ENCODE measurements at regions of chr2 and their contacts with region 1.

Region 1: DNA sequence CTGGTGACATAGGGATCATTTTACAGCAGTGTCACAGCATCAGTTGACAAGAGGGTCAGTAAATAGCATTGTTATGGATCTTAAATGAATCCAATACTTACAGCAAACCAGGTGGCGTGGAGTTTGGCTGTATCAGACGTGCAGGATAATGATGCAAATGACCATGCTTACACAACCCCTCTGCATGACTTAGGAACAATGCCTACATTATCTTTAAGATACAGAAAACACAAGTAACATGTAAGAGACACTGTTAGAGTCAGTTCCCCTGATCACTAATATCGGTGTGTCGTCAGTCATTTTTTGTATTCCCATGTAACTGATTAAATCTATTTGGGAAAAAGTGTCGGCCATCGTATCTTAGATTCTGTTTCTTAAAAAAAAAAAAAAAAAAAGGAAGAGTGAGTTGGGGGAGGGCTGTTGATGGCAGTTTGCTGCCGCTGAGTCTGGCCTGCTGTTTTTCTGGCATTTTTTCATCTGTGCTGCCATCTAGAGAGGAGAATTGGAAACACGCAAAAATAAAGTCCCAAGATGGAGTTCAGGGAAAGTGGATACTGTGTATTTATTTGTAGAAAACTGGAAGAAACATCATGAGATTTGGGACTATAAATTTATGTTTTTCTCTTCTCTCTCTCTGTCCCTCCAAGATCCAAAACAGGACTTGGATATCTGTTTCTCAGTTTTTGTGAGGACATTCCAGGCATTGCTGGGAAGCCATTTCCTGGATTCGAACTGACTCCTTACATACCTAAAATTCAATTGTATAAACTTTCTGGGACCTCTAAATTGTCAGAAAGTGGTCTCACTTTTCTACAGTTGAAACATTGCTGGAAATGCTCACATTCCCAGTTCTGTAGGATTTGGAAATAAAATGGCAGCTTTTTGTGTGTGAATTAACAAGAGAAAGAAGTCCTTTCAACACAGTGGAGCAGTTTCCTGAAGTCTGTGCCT is 60.3 kb upstream of the AGPS start:
- DNase-seq: peak in 7 of 9 donors; percentile 37 to 76 (median 72)
- ATAC-seq: peak; percentile 91
- H3K4me3 ChIP-seq: no peak overlapping the region
- H3K4me3 Mint-ChIP-seq: peak overlapping the region in 7 of 10 donors; percentile 3 to 73 (median 38)
- H3K27ac ChIP-seq: no peak overlapping the region
- H3K27ac Mint-ChIP-seq: peak overlapping the region in 8 of 9 donors; percentile 3 to 88 (median 56)
- H3K4me1 ChIP-seq: peaks cover 0 to 18% of the 10 kb centered on the region in 2 donors
- H3K4me1 Mint-ChIP-seq: peaks cover 4 to 33% (median 15%) of the 10 kb centered on the region in 7 donors
- H3K27me3 ChIP-seq: no peaks in the 10 kb centered on the region
- H3K27me3 Mint-ChIP-seq: no peaks in the 10 kb centered on the region

Region 2: DNA sequence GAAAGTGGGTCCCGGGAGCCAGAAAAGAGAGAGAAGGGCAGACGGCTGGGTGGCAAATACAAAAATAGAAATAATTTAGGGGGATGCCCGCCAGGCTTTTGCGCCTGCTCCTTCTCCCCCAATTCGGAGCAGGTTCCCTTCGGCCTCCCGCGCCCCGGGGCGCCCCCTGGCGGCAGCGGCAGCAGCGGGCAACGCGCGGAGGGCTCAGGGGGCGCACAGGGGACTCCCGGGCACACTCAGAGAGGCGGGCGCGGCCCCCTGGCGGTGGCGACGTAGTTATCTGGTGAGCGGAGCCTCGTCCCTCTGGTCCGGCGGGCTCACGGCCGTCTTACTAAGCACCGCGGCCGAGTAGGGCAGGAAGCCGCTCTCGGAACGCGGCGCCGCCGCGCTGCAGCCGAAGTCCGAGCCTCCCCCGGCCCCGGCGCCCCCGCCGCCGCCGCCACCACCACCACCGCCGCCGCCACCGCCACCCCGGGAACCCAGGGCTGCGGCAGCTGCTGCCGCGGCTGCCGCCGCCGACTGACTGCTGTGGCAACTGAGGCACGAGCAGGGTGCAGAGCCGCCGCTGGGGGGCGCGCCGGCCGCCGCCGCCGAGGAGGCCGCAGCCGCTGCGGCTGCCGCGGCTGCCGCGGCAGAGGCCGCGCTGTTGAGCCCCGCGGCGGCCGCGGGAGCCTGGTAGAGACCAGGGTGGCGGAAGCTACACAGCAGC is 1252.3 kb before region 1 on chr2:
- CTCF ChIA-PET with region 1: no interaction called
- POLR2A ChIA-PET with region 1: no interaction called
- intact Hi-C with region 1: no loop called
- DNase-seq: no peak
- ATAC-seq: peak; percentile 48
- H3K4me3 ChIP-seq: no peak overlapping the region
- H3K4me3 Mint-ChIP-seq: peak overlapping the region; percentile 64 to 82 (median 76)
- H3K27ac ChIP-seq: no peak overlapping the region
- H3K27ac Mint-ChIP-seq: peak overlapping the region in 6 of 9 donors; percentile 58 to 98 (median 90)
- H3K4me1 ChIP-seq: peaks cover 0 to 7% of the 10 kb centered on the region in 2 donors
- H3K4me1 Mint-ChIP-seq: peaks cover 0 to 29% (median 15%) of the 10 kb centered on the region in 7 donors
- H3K27me3 ChIP-seq: peaks cover 41 to 79% of the 10 kb centered on the region in 2 donors
- H3K27me3 Mint-ChIP-seq: peaks cover 67 to 83% (median 80%) of the 10 kb centered on the region in 5 donors

Region 3: DNA sequence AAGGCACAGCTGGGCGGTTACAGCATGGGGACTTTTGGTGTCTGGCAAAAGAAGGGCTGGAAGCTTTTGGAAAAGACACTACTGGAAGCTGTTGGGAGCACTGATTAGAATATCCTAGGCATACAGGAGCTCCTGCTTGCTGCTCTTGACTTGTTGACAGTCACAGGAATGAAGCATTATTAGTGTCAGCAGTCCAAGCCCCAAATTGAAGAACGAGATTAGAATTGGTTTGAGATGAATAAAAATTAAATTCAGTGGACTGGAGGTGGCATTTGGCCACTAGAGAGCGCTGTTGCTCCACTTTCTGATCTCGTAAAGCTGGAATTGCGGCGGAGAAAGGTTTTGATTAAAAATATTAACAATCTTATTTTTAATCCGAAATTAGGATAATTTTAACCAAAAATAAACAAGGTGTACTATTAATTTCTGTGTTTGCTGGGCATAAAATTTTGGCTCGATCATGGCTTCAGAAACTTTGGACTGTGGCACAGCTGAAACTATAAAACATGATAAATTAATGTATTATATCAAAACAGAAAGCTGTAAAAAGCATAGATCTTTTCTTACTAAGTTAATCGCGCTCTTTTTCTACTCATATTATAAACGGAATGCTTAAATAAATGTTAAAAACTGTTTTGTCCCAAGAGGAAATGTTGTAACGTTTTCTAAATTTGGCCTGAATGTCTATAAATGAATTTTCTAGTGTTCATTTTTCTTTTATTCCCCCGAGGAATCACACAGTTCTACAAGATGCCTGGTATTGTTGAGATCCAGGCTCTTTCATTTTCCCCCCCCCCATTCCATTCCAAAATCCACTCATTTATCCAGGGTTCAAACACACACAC is 1205.2 kb before region 1 on chr2:
- CTCF ChIA-PET with region 1: no interaction called
- POLR2A ChIA-PET with region 1: no interaction called
- intact Hi-C with region 1: loop called in 1 of 2 experiments (anchors 10 kb)
- DNase-seq: peak in 8 of 9 donors; percentile 26 to 68 (median 54)
- ATAC-seq: peak; percentile 51
- H3K4me3 ChIP-seq: no peak overlapping the region
- H3K4me3 Mint-ChIP-seq: peak overlapping the region in 4 of 10 donors; percentile 17 to 67 (median 38)
- H3K27ac ChIP-seq: no peak overlapping the region
- H3K27ac Mint-ChIP-seq: peak overlapping the region in 3 of 9 donors; percentile 8 to 63 (median 62)
- H3K4me1 ChIP-seq: peaks cover 3 to 20% of the 10 kb centered on the region in 2 donors
- H3K4me1 Mint-ChIP-seq: peaks cover 17 to 51% (median 41%) of the 10 kb centered on the region in 7 donors
- H3K27me3 ChIP-seq: peaks cover 33 to 74% of the 10 kb centered on the region in 2 donors
- H3K27me3 Mint-ChIP-seq: peaks cover 71 to 80% (median 76%) of the 10 kb centered on the region in 5 donors

Region 4: DNA sequence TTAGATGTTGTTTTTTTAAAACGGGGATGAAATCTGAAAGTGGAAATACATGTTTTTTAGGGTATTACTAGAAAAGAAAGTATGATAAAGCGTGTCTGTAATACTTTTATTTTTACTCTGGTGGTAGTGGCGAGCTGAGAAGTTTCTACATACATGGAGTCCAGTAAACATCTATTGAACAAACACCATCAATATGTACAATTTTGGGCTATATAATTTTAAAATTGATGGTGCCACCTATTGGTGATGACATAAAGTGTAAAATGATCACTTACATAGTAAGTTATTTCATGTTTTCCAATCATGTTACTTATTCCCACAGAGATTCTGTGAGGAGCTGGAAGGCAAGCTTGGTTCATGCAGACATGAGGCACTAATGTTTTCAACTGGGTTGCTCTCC is 36.3 kb before region 1 on chr2:
- CTCF ChIA-PET with region 1: interaction called, 11 read pairs
- POLR2A ChIA-PET with region 1: interaction called, 7 read pairs
- intact Hi-C with region 1: loop called (anchors 1 kb)
- DNase-seq: peak in 6 of 9 donors; percentile 27 to 52 (median 41)
- ATAC-seq: peak; percentile 70
- H3K4me3 ChIP-seq: no peak overlapping the region
- H3K4me3 Mint-ChIP-seq: no peak overlapping the region
- H3K27ac ChIP-seq: no peak overlapping the region
- H3K27ac Mint-ChIP-seq: peak overlapping the region in 3 of 9 donors; percentile 22 to 56 (median 32)
- H3K4me1 ChIP-seq: peaks cover 0 to 1% of the 10 kb centered on the region in 2 donors
- H3K4me1 Mint-ChIP-seq: peaks cover 0 to 34% (median 23%) of the 10 kb centered on the region in 7 donors
- H3K27me3 ChIP-seq: no peaks in the 10 kb centered on the region
- H3K27me3 Mint-ChIP-seq: no peaks in the 10 kb centered on the region

Region 5: GRCh38 chr2:177392373-177393202 is 60.3 kb after region 1 on chr2 and contains the start of gene AGPS:
- CTCF ChIA-PET with region 1: no interaction called
- POLR2A ChIA-PET with region 1: interaction called, 3 read pairs
- intact Hi-C with region 1: loop called in 1 of 2 experiments (anchors 2 kb)
- DNase-seq: peak; percentile 62 to 86 (median 71)
- ATAC-seq: peak; percentile 94
- H3K4me3 ChIP-seq: peak within 1 kb of the TSS; percentile 67
- H3K4me3 Mint-ChIP-seq: peak within 1 kb of the TSS; percentile 81 to 99 (median 96)
- H3K27ac ChIP-seq: peak within 1 kb of the TSS; percentile 53
- H3K27ac Mint-ChIP-seq: peak within 1 kb of the TSS; percentile 85 to 97 (median 92)
- H3K4me1 ChIP-seq: peaks cover 20 to 23% of the 10 kb centered on the region in 2 donors
- H3K4me1 Mint-ChIP-seq: peaks cover 48 to 74% (median 61%) of the 10 kb centered on the region in 7 donors
- H3K27me3 ChIP-seq: no peaks in the 10 kb centered on the region
- H3K27me3 Mint-ChIP-seq: no peaks in the 10 kb centered on the region
- total RNA-seq, gene AGPS: 21.8 to 60.4 (median 26.1) TPM

Region 6: DNA sequence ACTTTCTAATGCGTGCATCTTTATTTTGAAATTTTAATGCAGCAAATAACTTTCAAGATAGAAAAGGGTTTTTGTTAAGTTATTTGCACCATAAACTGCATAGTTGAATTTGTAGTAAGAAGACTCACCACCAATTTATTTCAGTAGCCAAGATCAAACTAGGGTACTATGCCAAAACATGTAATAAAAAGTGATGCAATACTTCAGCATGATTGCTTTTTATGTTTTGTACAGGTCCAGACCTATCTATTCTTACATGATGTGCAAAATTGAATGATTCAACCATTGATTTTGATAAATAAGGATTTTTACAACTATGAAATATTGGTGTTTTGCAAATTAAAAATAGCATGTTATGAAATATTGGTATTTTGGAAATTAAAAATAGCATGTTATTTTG is 87.0 kb after region 1 on chr2:
- CTCF ChIA-PET with region 1: interaction called, 55 read pairs
- POLR2A ChIA-PET with region 1: interaction called, 3 read pairs
- intact Hi-C with region 1: loop called (anchors 1 kb)
- DNase-seq: no peak
- ATAC-seq: no peak
- H3K4me3 ChIP-seq: no peak overlapping the region
- H3K4me3 Mint-ChIP-seq: no peak overlapping the region
- H3K27ac ChIP-seq: no peak overlapping the region
- H3K27ac Mint-ChIP-seq: peak overlapping the region in 1 of 9 donors; percentile 22
- H3K4me1 ChIP-seq: no peaks in the 10 kb centered on the region
- H3K4me1 Mint-ChIP-seq: peaks cover 5 to 54% (median 27%) of the 10 kb centered on the region in 7 donors
- H3K27me3 ChIP-seq: no peaks in the 10 kb centered on the region
- H3K27me3 Mint-ChIP-seq: no peaks in the 10 kb centered on the region

Region 7: DNA sequence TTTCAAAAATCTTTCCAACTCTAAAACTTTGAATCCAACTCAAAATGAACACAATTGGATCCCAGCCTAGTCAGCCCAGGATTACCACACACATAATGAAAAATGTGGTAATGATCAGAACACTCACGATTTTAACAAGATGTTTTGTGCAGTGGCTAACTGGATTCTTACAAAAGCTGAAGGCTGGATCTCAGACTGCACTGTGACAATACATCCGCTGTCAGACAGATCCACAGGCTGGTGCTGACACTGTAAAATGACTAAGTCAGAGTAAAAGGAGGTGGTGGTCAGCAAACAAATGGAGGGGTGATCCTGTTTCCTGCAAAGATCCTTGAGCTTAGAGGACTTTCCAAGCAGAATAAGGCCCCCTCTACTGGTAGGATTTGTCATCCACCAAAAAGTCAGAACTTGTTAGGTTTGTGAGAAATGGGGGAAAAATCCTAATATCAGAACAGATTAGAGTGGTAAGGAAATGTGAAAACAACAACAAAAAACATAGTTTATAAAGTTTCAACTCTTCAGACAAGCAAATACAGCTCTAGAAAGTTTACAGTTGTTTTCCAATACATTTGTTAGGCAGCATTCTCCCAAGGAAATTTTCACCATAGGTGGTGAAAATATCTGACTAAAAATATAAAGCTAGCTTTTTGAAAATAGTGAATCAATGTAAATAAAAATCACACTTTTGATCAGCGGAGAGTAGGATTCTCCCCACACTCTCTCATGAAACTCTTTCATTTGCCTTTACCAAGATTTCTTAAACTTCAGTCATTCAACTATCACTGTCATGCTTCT is 272.2 kb after region 1 on chr2:
- CTCF ChIA-PET with region 1: interaction called, 4 read pairs
- POLR2A ChIA-PET with region 1: no interaction called
- intact Hi-C with region 1: loop called (anchors 1 kb)
- DNase-seq: peak in 2 of 9 donors; percentile 3 to 5
- ATAC-seq: no peak
- H3K4me3 ChIP-seq: no peak overlapping the region
- H3K4me3 Mint-ChIP-seq: no peak overlapping the region
- H3K27ac ChIP-seq: no peak overlapping the region
- H3K27ac Mint-ChIP-seq: no peak overlapping the region
- H3K4me1 ChIP-seq: no peaks in the 10 kb centered on the region
- H3K4me1 Mint-ChIP-seq: peaks cover 0 to under 1% (median 0%) of the 10 kb centered on the region in 7 donors
- H3K27me3 ChIP-seq: no peaks in the 10 kb centered on the region
- H3K27me3 Mint-ChIP-seq: peaks cover 0 to 12% (median 6%) of the 10 kb centered on the region in 5 donors

Region 8: DNA sequence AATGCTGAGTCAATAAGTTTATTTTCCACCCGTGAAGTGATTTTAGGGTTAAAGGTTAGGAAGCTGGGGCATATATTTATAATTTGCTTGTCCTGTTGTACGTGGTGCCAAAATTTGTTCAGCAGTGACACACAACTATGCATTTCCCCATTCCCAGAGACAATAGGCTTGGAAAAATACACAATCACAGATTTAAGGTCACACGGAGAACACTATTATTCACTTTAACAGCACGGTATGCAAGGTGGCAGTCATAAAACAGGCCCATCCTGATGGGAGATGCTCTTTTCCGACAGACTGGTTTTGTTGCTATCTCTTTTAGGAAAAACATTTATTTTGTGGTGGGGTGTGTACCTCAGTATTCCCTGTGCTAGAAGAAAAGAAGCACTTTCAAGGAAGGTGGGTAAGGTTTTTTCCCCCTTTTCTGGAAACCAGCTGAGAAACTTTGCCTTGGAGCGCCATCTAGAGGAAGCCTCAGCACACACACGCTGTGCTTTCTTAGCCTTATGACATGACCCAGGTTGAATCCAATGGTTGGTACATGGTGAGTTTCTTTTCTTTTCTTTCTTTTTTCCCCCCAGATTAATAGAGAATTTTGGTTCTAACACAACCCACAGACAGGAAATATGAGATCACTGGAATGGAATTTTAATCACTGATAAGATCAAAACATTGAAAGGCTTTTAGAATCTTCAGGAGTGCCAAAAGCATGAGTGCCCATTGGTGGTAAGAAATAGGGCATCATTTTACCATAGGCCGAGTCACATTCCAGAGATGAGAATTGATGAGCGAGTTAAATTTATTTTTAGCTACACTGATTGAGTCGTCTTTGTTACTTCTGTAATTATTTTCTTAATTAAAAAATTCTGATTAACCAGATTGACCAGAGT is 392.3 kb after region 1 on chr2:
- CTCF ChIA-PET with region 1: interaction called, 3 read pairs
- POLR2A ChIA-PET with region 1: no interaction called
- intact Hi-C with region 1: loop called (anchors 1 kb)
- DNase-seq: peak in 7 of 9 donors; percentile 9 to 37 (median 20)
- ATAC-seq: peak; percentile 55
- H3K4me3 ChIP-seq: no peak overlapping the region
- H3K4me3 Mint-ChIP-seq: no peak overlapping the region
- H3K27ac ChIP-seq: no peak overlapping the region
- H3K27ac Mint-ChIP-seq: no peak overlapping the region
- H3K4me1 ChIP-seq: no peaks in the 10 kb centered on the region
- H3K4me1 Mint-ChIP-seq: peaks cover 0 to 2% (median 0%) of the 10 kb centered on the region in 7 donors
- H3K27me3 ChIP-seq: no peaks in the 10 kb centered on the region
- H3K27me3 Mint-ChIP-seq: peaks cover 11 to 33% (median 14%) of the 10 kb centered on the region in 5 donors